HCT116 (cell line): ENCODE measurements at regions of chr17 and their contacts with region 1.

Region 1: GRCh38 chr17:5249615-5250014 is 15.0 kb upstream of the SCIMP start:
- DNase-seq: peak; percentile 72
- ATAC-seq: peak; percentile 95
- H3K4me3 ChIP-seq: no peak overlapping the region
- H3K27ac ChIP-seq: no peak overlapping the region
- H3K4me1 ChIP-seq: no peaks in the 10 kb centered on the region
- H3K27me3 ChIP-seq: no peaks in the 10 kb centered on the region
- CTCF ChIP-seq: peak; percentile 62 to 86 (median 71)
- POLR2A ChIP-seq: no peak
- RAD21 ChIP-seq: peak; percentile 78

Region 2: DNA sequence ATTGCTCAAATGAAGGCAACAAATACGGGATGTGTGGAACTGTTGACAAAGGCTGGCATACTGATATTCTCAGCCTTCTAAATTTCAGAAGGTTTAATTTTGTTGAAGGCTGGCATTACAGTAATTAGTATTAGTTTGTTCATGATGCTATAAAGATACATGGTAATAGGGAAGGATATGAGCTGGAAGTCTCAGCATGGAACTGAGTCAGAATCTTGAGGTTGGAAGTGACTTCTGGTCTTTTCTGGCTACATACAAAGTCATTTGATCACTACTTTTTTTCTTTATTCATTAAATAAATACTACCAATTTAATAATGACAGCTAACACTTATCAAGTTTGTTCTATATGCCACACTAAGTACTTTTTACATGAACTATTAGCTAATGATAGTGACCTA is 55.0 kb after region 1 on chr17:
- CTCF ChIA-PET with region 1: no interaction called
- POLR2A ChIA-PET with region 1: no interaction called
- RAD21 ChIA-PET with region 1: no interaction called
- intact Hi-C with region 1: loop called (anchors 1 kb)
- DNase-seq: no peak
- ATAC-seq: no peak
- H3K4me3 ChIP-seq: no peak overlapping the region
- H3K27ac ChIP-seq: no peak overlapping the region
- H3K4me1 ChIP-seq: peaks cover 0 to 18% of the 10 kb centered on the region in 2 experiments; a peak in 3 of 4 replicates
- H3K27me3 ChIP-seq: no peaks in the 10 kb centered on the region
- CTCF ChIP-seq: no peak
- POLR2A ChIP-seq: no peak
- RAD21 ChIP-seq: no peak

Region 3: DNA sequence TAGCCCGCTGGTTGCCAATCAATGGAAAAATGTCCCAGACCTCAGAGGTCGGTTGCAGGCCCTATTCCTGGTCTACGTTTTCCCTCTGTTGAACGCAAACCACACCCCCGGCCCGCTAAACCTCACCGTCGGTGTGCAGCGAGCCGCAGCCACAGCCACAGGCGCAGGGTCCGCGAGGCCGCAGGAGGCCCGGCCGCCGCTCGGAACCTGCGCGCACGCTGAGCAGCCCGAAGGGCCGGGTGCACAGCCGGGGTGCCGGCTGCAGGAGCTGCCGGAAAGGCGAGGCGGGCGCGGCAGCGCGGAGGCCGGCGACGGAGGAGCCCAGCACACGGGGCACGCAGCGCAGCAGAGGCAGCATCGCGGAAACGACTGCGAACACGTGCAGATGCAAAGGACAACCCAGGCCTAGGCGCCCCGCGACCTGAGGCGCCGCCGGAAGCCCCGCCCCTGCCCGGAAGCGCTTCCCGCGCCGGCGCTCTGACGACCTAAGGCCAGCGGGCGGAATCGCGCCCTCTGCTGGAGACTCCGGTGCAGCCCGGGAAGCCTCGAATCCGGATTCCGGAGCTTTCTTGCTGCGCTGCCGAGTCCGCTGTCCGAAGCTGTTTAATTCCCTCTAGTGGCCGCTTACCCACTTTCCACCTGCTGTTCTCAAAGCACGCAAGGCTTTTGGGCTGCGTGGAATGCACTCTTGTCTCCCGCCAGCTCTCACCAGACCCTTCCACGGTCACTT is 189.3 kb after region 1 on chr17 and contains the start of gene C1QBP:
- CTCF ChIA-PET with region 1: interaction called, 5 read pairs
- POLR2A ChIA-PET with region 1: no interaction called
- RAD21 ChIA-PET with region 1: interaction called in 1 of 2 experiments, 5 read pairs
- intact Hi-C with region 1: loop called (anchors 1 kb)
- DNase-seq: peak; percentile 91
- ATAC-seq: peak; percentile 91
- H3K4me3 ChIP-seq: peak within 1 kb of the TSS; percentile 81 to 100
- H3K27ac ChIP-seq: peak within 1 kb of the TSS; percentile 92
- H3K4me1 ChIP-seq: peaks cover 13 to 18% of the 10 kb centered on the region in 2 experiments
- H3K27me3 ChIP-seq: no peaks in the 10 kb centered on the region
- CTCF ChIP-seq: peak; percentile 93 to 99 (median 96)
- POLR2A ChIP-seq: peak; percentile 68
- RAD21 ChIP-seq: peak; percentile 89
- total RNA-seq, gene C1QBP: 524 TPM

Region 4: GRCh38 chr17:6421700-6422604 is 1172.3 kb after region 1 on chr17:
- CTCF ChIA-PET with region 1: no interaction called
- POLR2A ChIA-PET with region 1: no interaction called
- RAD21 ChIA-PET with region 1: no interaction called
- intact Hi-C with region 1: loop called (anchors 5 kb)
- DNase-seq: peak; percentile 69
- ATAC-seq: peak; percentile 90
- H3K4me3 ChIP-seq: no peak overlapping the region
- H3K27ac ChIP-seq: no peak overlapping the region
- H3K4me1 ChIP-seq: peaks cover 0 to 4% of the 10 kb centered on the region in 2 experiments; a peak in 2 of 4 replicates
- H3K27me3 ChIP-seq: peaks cover 5% of the 10 kb centered on the region; the same call in 1 of the 2 replicates
- CTCF ChIP-seq: peak; percentile 77 to 88 (median 80)
- POLR2A ChIP-seq: no peak
- RAD21 ChIP-seq: peak; percentile 95

Region 5: GRCh38 chr17:6435968-6436367 is 1186.4 kb after region 1 on chr17:
- CTCF ChIA-PET with region 1: no interaction called
- POLR2A ChIA-PET with region 1: no interaction called
- RAD21 ChIA-PET with region 1: no interaction called
- intact Hi-C with region 1: loop called (anchors 5 kb)
- DNase-seq: peak; percentile 46
- ATAC-seq: peak; percentile 97
- H3K4me3 ChIP-seq: no peak overlapping the region
- H3K27ac ChIP-seq: no peak overlapping the region
- H3K4me1 ChIP-seq: no peaks in the 10 kb centered on the region; a peak in 1 of 4 replicates
- H3K27me3 ChIP-seq: no peaks in the 10 kb centered on the region
- CTCF ChIP-seq: peak; percentile 57 to 85 (median 84); a peak in 5 of 6 replicates
- POLR2A ChIP-seq: no peak
- RAD21 ChIP-seq: peak; percentile 81